Activated naive CD8-positive, alpha-beta T cell treated with anti-CD3 and anti-CD28 coated beads, Interleukin-2, amount 10 ng/mL, durations not matched to agents 7 days and 5 days (primary cell): ENCODE measurements at regions of chr1 and their contacts with region 1.

Region 1: DNA sequence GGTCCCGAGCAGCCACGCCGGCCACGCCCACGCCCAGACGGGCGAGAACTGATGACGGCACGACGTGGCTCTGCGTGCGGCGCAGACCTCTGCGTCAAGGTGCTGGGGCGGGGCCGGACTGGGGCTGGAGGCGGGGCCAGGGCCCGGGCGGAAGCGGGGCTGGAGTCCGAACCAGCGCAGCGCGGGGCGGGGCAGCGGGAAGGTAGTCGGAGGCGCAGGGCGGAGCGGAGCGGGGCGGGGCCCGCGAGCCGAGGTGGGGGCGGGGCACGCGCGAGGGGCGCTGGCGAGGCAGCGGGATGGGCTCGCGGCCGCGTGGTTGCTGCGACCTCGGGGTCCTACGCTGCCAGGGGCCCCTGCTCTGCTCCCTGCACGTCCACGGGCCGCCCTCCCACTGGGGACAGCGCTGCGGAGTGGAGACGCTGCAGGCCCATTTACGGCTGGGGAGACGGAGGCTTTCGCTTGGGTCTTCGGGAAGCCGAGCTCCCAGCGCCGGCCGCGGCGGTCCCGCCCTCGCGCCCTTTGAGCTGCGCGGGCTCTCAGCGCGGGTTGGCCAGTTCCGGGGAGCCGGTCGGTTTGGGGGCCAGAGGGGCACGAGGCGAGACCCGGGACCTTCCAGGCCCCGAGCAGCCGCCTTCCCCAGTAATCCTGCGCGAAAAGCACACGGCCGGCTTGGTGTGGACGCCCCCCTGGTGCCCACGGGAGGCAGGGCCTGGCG is at the start of gene PEX10:
- DNase-seq: peak; percentile 100
- ATAC-seq: peak; percentile 75
- H3K4me3 Mint-ChIP-seq: peak within 1 kb of the TSS; percentile 92
- H3K27ac Mint-ChIP-seq: peak within 1 kb of the TSS; percentile 90
- H3K4me1 Mint-ChIP-seq: peaks cover 29% of the 10 kb centered on the region
- H3K27me3 Mint-ChIP-seq: no peaks in the 10 kb centered on the region
- total RNA-seq, gene PEX10: 9.6 to 9.9 TPM

Region 2: DNA sequence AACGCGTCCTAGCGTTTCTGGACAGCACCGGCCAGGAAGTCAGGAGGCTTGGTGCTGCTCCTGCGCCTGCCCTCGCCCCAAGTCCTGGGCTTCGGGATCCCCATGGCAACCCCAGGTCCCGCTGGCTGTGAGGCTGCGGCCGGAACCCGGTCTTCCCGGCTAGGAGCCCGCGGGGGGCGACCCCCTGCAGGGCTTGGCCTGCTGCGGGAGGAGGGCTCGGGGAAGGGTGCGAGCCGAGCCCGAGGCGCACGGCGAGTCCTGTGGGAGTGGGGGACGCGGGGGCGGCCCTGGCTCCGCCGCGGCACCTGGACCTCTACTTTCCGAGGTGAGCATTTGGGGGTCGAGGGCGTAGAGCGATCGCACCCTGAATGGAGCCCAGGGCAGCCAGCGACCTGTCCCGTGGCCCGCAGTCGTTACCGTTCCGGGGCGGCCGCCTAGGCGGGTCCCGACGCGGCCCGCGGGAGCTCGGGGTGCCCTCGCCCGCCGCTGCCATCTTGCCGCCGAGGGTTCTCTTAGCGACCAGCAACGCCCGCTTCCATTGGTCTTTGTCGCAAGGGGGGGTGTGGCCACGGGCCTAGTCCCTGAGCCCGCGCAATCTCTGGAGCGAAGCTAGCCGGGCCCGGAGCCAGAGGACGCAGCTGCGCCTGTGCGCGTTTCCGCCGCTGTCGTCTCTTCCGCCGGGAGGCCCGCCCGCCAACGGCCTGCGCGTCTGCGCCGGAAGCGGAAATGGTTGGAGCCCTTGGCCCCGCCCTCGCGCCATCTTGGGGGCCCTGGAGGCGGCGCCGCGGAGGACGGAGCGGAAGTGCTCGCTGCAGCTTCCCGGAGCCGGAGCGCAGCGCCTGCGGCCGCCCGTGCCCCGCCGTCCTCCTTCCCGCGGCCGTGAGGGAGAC is 21.4 kb before region 1 on chr1 and contains the starts of genes MORN1 and RER1:
- POLR2A ChIA-PET with region 1: interaction called, 15 read pairs
- DNase-seq: peak; percentile 99
- ATAC-seq: peak; percentile 99
- H3K4me3 Mint-ChIP-seq: peak within 1 kb of the TSS; percentile 91
- H3K27ac Mint-ChIP-seq: peak within 1 kb of the TSS; percentile 86
- H3K4me1 Mint-ChIP-seq: peaks cover 22% of the 10 kb centered on the region
- H3K27me3 Mint-ChIP-seq: no peaks in the 10 kb centered on the region
- total RNA-seq, gene MORN1: 10.5 to 11.6 TPM
- total RNA-seq, gene RER1: 140 to 147 TPM

Region 3: DNA sequence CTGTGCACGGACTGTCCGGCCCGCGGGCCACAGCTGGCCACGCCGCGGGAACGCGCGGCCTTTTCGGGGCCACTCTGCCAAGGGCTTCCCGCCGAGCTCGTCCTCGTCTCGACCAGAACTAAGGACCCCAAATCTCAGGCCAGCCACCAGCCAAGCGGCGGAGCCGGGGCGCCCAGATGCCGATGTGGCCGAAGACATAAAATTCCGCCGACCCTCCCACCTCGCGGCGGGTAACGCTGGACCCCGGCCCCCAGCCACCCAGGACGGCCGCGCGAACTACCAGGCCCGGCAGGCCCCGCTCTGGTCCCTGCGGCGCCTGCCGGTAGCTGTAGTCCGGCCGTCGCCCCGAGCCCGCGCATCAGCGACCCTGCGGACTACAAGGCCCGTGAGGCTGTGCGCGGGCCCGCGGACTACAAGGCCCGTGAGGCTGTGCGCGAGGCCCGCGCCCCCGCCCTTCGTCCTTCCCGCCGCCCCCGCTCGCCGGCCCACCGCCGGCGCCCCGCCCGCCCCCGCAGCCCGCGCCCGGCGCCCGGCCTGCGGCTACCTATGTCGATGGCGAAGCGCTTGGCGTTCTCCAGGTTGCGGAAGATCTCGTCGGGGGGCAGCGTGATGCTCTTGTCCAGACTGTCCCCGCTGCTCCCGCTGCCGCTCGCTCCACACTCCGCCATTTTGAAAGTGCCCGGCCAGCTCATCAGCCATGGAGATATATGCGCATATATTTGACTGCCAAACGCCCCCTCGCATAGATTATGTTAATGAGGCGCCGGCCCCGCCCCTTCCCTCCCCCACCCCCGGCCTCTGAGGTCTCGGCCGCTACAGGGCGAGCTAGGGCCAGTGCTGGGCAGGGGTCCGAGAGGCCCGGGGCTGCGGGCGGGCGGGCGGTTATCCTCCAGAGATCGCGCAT is 113.5 kb after region 1 on chr1 and contains the start of gene PANK4:
- POLR2A ChIA-PET with region 1: interaction called, 47 read pairs
- DNase-seq: peak; percentile 92
- ATAC-seq: peak; percentile 85
- H3K4me3 Mint-ChIP-seq: peak within 1 kb of the TSS; percentile 86
- H3K27ac Mint-ChIP-seq: peak within 1 kb of the TSS; percentile 96
- H3K4me1 Mint-ChIP-seq: peaks cover 35% of the 10 kb centered on the region
- H3K27me3 Mint-ChIP-seq: peaks cover 16% of the 10 kb centered on the region
- total RNA-seq, gene PANK4: 86.5 to 88.9 TPM

Region 4: DNA sequence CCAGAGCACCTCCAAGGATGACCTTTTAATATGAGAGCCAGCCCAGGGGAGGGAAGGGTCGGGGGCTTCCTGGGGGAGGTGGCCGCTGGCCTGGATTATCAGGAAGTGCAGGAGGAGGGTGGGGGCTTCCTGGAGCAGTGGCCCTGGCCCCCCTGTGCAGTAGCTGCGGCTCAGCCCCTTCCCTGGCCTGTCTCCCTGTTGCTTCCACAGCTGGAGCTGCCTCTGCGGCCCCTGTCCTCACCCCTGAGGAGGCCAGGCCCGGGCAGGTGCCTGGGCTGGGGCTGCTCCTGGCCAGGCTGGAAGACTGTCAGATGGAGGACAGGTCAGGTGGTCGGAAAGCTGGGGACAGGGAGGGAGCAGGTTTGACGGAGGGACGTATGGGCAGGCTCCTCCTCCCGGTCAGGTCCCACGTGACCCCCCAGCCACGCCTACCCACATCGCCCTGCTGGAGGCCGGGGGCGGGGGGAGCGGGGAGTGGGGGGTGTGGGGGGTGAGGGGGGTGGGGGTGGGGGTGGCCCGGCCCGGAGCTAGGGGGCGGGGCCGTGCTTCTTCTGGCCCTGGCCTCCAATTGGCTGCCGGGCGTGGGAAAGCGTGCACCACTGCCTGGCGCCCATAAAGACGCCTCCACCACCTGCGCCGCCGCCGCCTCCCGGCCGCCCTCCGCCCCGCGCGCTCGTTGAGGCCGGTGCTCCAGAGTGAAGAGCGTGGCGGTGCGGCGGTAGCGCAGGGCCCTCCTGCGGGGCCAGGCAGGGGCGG is 133.3 kb after region 1 on chr1:
- POLR2A ChIA-PET with region 1: interaction called, 98 read pairs
- DNase-seq: peak; percentile 91
- ATAC-seq: peak; percentile 37
- H3K4me3 Mint-ChIP-seq: peak overlapping the region; percentile 91
- H3K27ac Mint-ChIP-seq: peak overlapping the region; percentile 96
- H3K4me1 Mint-ChIP-seq: peaks cover 9% of the 10 kb centered on the region
- H3K27me3 Mint-ChIP-seq: peaks cover 5% of the 10 kb centered on the region